ENCODE measurements at regions of chr20 and their contacts with region 1.

Region 1: DNA sequence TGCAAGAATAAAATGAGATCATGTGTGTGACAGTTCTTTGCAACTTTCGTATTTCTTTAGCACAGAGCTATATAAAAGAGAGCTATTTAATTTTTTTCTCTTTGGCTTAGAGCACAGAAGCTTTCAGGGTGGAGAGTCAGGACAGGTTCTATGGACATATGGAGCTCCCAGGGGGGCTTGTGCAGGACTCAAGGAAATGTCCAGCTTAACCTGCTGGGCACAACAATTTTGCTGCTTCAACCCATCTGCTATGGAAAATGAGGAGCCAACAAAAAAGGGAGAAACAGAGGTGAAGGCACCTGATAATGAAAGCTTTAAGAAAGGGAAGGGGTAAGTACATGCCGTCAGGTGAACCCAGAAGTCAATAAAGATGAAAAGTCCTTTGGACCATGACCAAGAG is 5.1 kb upstream of the SNAP25 start:
- DNase-seq: no peak
- H3K4me3 ChIP-seq: no peak overlapping the region
- H3K27ac ChIP-seq: no peak overlapping the region
- H3K4me1 ChIP-seq: peaks cover 0 to 13% (median under 1%) of the 10 kb centered on the region in 4 donors
- H3K27me3 ChIP-seq: peaks cover 0 to 15% of the 10 kb centered on the region in 2 donors
- CTCF ChIP-seq: no peak

Region 2: DNA sequence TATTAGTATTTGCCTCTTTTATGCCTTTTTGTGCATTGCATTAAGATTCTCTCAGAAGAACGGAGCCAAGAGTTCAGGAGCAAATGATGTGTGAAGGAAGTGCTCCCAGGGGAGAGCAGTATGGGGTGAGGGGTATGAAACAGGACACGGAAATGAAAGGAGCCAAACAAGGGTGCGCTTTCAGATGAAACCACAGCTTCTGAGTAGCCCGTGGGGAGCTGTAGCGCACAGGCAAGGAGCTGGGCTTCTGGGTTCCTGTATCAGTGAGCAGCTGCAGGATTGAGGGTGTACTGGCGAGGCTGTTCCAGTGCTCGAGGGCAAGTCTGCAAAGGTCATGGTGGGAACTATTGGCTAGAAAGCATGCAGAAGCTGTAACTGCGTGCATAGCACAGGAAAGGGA is 153.3 kb before region 1 on chr20:
- intact Hi-C with region 1: no loop called
- DNase-seq: no peak
- H3K4me3 ChIP-seq: no peak overlapping the region
- H3K27ac ChIP-seq: no peak overlapping the region
- H3K4me1 ChIP-seq: no peaks in the 10 kb centered on the region
- H3K27me3 ChIP-seq: no peaks in the 10 kb centered on the region
- CTCF ChIP-seq: no peak

Region 3: DNA sequence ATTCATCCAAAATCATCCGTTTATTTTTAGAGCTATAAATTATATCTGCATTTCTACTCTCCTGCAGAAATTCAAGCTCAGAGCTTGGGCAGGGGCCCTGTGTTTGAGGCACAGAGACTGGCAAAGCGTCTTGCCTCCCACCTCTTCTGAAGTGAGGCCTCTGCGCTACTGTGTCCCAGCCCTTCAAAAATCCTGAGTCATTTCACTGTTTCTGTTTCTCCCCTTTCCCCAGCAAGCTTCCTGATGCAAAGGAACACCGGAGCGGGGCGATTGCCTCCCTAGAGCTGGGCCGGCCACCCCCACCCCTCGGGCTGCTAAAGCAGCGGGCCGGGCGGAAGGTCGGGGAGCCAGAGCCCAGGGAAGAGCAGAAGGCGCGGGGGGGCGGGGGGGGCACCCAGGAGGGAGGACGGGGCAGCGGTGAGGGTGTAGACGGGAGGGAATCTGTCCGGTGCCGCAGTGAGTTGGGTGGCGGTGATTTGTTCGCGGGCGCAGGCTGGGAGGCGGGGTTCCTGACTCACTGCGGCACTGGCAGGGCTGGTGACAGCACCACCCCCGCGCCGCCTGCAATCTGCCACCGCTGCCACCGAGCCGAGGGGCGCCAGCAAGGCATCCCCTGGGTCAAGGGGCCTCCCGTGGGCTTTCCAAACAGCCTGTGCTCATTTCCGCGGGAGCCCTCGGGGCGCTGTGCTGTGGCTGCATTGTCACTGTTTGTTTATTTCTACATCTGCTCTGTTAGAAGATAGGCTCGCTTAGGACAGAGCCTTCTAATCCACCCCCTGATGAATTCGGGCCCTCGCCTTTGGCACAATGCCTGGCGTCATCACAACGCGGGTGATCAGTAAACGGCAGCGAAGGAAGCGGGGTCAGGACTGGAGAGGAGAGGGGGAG is 41.4 kb before region 1 on chr20:
- intact Hi-C with region 1: loop called (anchors 5 kb)
- DNase-seq: peak; percentile 40 to 73
- H3K4me3 ChIP-seq: peak overlapping the region; percentile 44 to 58
- H3K27ac ChIP-seq: peak overlapping the region; percentile 42 to 47
- H3K4me1 ChIP-seq: peaks cover 0 to 15% (median 5%) of the 10 kb centered on the region in 4 donors
- H3K27me3 ChIP-seq: no peaks in the 10 kb centered on the region
- CTCF ChIP-seq: no peak

Region 4: DNA sequence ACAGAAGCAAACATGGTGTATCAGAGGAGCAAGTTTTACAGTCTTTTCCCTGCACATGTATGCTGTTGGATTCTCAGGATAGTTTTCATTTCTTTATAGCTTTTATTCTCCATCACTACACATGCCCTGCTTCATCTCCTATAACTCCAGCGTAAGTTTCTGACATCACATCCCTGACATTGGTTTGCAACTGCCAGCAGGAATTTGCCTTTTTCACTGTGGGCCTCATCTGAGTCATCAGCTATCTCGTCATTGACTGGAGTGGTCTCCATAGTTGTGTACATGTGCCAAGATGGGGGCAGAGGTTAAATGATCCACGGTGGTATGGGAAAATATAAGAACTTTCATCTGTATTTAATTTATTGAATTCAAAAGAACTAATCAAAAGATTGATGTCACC is 318.3 kb after region 1 on chr20:
- intact Hi-C with region 1: no loop called
- DNase-seq: no peak
- H3K4me3 ChIP-seq: no peak overlapping the region
- H3K27ac ChIP-seq: no peak overlapping the region
- H3K4me1 ChIP-seq: no peaks in the 10 kb centered on the region
- H3K27me3 ChIP-seq: no peaks in the 10 kb centered on the region
- CTCF ChIP-seq: no peak